Body of pancreas (tissue), 4 donors: ENCODE measurements at regions of chr22 and their contacts with region 1.

Region 1: DNA sequence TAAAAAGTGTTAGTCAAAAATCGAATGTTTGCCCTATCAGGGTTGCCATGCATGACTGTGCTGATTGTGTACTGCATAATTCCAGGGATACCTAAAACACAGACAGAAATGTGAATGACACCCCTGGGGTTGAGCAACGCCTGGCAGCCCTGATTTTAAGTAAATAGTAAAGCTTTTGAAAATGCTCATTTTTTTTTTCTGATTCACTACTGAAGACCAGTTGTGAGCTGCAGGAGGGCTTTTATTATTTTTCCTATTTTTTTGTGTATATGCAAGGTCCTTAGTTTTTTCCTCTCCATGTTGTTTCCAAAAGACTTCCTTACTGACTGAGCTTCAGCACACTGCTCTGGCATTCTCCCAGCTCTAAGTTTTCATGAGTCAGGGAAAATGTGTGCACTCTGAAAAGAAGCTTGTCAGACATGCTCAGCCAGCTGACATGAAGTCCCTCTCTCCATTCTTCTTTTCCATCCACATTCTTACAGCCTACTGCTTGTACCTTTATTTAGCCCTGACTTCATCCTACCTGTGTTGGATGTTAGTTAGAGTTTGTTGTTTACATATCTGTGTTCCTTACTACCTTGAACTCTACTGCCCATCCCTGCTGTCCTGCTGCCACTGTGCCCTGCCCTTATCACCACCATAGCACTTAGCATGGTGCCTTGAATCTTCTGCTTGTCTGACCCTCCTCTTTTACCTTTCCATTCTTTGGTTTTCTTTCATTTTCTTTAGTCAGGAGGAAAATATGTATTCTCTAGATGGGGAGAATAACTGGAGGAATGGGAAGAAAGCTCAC is 79.5 kb downstream of the HORMAD2 start:
- DNase-seq: peak in 3 of 4 donors; percentile 22 to 35 (median 25)
- ATAC-seq: peak; percentile 60
- H3K4me3 ChIP-seq: no peak overlapping the region
- H3K27ac ChIP-seq: no peak overlapping the region
- H3K4me1 ChIP-seq: no peaks in the 10 kb centered on the region
- H3K27me3 ChIP-seq: no peaks in the 10 kb centered on the region
- CTCF ChIP-seq: no peak
- POLR2A ChIP-seq: no peak

Region 2: GRCh38 chr22:29886596-29886995 is 273.2 kb before region 1 on chr22:
- intact Hi-C with region 1: no loop called
- DNase-seq: no peak
- ATAC-seq: no peak
- H3K4me3 ChIP-seq: no peak overlapping the region
- H3K27ac ChIP-seq: no peak overlapping the region
- H3K4me1 ChIP-seq: peaks cover 39% of the 10 kb centered on the region
- H3K27me3 ChIP-seq: no peaks in the 10 kb centered on the region
- CTCF ChIP-seq: no peak
- POLR2A ChIP-seq: no peak

Region 3: DNA sequence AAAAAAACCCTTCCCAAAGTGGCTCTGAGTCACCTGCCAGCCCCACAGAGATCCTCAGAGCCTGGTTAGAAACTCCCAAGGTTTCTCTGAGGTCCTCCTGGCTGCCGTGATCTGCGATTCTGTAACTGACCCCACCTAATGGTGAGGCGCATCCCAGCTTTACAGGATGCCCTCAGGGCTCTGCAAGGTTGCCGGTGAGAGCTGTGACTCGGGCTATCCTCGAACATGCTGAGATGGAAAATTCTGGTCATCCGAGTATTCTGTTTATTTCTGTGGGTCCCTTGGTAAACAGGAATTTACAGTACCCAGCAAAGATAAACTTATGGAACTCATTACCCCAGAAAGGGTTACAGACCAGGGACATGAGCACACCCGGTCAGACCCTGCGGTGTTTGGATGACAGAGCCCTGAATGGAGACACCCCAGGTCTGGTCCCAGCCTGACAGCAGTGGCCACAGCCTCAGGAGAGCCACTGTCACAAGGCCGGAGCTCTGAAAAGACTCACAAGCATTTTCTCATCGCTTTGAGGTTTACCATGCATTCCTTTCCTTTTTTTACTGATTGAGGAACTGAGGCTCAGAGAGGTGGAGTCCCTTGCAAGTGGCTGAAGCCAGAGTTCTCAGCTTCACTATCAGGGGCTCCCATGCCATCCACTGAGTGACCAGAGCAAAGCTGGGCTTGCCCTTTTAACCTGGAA is 64.6 kb after region 1 on chr22:
- intact Hi-C with region 1: loop called (anchors 10 kb)
- DNase-seq: no peak
- ATAC-seq: no peak
- H3K4me3 ChIP-seq: no peak overlapping the region
- H3K27ac ChIP-seq: no peak overlapping the region
- H3K4me1 ChIP-seq: no peaks in the 10 kb centered on the region
- H3K27me3 ChIP-seq: no peaks in the 10 kb centered on the region
- CTCF ChIP-seq: no peak
- POLR2A ChIP-seq: no peak

Region 4: DNA sequence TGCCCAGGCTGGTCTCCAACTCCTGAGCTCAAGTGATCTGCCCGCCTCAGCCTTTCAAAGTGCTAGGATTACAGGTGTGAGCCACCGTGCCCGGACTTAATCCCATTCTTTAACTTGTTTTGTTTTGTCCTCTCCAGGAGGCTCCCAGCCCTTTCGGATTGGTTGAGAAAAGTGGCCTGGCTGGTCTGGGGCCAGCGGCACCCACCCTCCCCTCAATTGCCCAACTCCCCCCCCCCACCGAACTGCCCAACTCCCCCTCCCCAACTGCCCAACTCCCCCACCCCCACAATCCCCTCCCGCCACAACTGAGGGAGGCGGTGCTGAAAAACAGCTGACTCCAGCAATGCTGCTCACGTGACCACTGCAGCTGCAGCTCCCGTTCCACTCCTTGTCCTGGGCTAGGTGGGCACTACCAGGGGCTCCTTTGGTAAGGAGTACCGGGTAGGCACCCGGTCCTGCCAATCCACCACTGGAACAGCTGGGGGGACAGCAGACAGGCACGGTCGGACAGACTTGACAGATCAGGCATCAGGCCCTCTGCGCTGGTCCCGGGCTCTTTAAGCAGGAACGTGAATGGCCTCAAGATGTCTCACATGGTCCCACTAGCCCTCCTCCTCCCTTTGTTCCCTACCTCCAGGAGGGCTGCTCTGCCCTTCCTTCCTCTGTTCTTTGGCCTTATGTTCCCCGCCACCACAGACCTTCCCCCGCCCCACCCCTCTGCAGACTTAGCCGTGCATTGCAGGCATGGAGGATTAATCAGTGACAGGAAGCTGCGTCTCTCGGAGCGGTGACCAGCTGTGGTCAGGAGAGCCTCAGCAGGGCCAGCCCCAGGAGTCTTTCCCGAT is 446.9 kb after region 1 on chr22 and contains the start of gene TCN2:
- intact Hi-C with region 1: no loop called
- DNase-seq: peak; percentile 65 to 83 (median 80)
- ATAC-seq: peak; percentile 81
- H3K4me3 ChIP-seq: peak within 1 kb of the TSS; percentile 34 to 46
- H3K27ac ChIP-seq: peak within 1 kb of the TSS; percentile 75 to 86 (median 80)
- H3K4me1 ChIP-seq: peaks cover 25% of the 10 kb centered on the region
- H3K27me3 ChIP-seq: no peaks in the 10 kb centered on the region
- CTCF ChIP-seq: peak in 1 of 7 experiments; percentile 30
- POLR2A ChIP-seq: peak; percentile 24 to 62 (median 58)
- total RNA-seq, gene TCN2: 14.8 to 16.3 TPM